Naive thymus-derived CD4-positive, alpha-beta T cell (primary cell): ENCODE measurements at regions of chr12 and their contacts with region 1.

Region 1: GRCh38 chr12:19439059-19440018 is at the start of gene AEBP2:
- DNase-seq: peak; percentile 79 to 97 (median 94)
- ATAC-seq: peak; percentile 96
- H3K4me3 ChIP-seq: peak within 1 kb of the TSS; percentile 59
- H3K4me3 Mint-ChIP-seq: peak within 1 kb of the TSS; percentile 91 to 100 (median 99)
- H3K27ac ChIP-seq: peak within 1 kb of the TSS; percentile 88
- H3K27ac Mint-ChIP-seq: peak within 1 kb of the TSS; percentile 82 to 98 (median 96)
- H3K4me1 ChIP-seq: peaks cover 23 to 35% of the 10 kb centered on the region in 2 donors
- H3K4me1 Mint-ChIP-seq: peaks cover 19 to 52% (median 49%) of the 10 kb centered on the region in 7 donors
- H3K27me3 ChIP-seq: no peaks in the 10 kb centered on the region
- H3K27me3 Mint-ChIP-seq: no peaks in the 10 kb centered on the region
- total RNA-seq, gene AEBP2: 49.2 to 58.7 (median 57.5) TPM

Region 2: DNA sequence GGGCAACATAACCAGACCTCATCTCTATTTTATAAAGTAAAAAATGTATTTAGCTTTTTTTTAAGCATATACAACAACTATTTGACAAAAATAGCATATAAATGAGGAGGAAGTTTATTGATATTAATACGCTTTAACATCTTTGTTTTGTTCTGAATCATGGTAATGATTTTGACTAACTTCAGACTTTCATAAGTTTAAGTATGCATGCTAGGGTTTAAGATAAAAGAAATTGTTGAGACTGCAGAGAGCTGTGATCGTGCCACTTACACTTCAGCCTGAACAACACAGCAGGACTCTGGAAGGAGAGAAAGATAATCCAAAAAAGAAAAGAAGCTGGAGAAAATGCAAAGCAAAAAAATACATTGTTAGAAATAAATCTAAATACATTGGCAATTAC is 88.0 kb before region 1 on chr12:
- CTCF ChIA-PET with region 1: no interaction called
- POLR2A ChIA-PET with region 1: no interaction called
- intact Hi-C with region 1: no loop called
- DNase-seq: no peak
- ATAC-seq: no peak
- H3K4me3 ChIP-seq: no peak overlapping the region
- H3K4me3 Mint-ChIP-seq: no peak overlapping the region
- H3K27ac ChIP-seq: no peak overlapping the region
- H3K27ac Mint-ChIP-seq: no peak overlapping the region
- H3K4me1 ChIP-seq: no peaks in the 10 kb centered on the region
- H3K4me1 Mint-ChIP-seq: no peaks in the 10 kb centered on the region
- H3K27me3 ChIP-seq: no peaks in the 10 kb centered on the region
- H3K27me3 Mint-ChIP-seq: no peaks in the 10 kb centered on the region

Region 3: DNA sequence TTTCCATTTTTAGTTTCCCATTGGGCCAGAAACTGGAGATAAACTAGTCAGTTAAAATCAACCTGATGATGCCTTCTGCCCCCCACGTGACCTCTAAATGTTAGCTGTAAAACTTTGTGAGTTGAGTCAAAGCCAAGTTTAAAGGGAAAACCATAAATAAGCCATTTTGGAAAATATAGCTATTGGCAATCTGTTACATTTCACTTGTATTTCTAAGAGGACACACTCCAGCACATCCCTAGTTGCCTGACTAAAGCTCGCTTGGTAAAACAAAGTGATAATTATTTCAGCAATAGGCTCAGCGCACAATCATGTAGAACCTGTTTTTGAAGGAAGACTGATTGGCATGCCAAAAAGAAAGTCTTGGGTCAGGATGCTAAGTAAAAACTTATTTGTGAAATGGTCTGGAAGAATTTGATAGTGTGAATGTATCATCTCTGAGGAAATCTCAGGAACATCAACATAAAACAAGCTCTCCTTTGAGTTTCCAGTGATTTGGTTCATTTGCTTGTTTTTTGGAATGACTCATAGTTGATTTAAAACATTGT is 49.2 kb before region 1 on chr12:
- CTCF ChIA-PET with region 1: no interaction called
- POLR2A ChIA-PET with region 1: no interaction called
- intact Hi-C with region 1: loop called in 1 of 2 experiments (anchors 10 kb)
- DNase-seq: no peak
- ATAC-seq: no peak
- H3K4me3 ChIP-seq: no peak overlapping the region
- H3K4me3 Mint-ChIP-seq: no peak overlapping the region
- H3K27ac ChIP-seq: no peak overlapping the region
- H3K27ac Mint-ChIP-seq: no peak overlapping the region
- H3K4me1 ChIP-seq: no peaks in the 10 kb centered on the region
- H3K4me1 Mint-ChIP-seq: peaks cover 0 to 4% (median 0%) of the 10 kb centered on the region in 7 donors
- H3K27me3 ChIP-seq: no peaks in the 10 kb centered on the region
- H3K27me3 Mint-ChIP-seq: no peaks in the 10 kb centered on the region

Region 4: DNA sequence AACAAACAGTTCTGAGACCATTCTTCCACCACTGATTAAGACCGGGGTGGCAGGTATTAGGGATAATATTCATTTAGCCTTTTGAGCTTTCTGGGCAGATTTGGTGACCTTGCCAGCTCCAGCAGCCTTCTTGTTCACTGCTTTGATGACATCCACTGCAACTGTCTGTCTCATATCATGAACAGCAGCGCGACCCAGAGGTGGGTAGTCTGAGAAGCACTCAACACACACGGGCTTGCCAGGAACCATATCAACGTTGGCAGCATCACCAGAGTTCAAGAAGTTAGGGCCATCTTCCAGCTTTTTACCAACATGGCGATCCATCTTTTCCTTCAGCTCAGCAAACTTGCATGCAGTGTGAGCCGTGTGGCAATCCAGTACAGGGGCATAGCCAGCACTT is 16.8 kb after region 1 on chr12:
- CTCF ChIA-PET with region 1: interaction called, 3 read pairs
- POLR2A ChIA-PET with region 1: no interaction called
- intact Hi-C with region 1: loop called in 1 of 2 experiments (anchors 2 kb)
- DNase-seq: no peak
- ATAC-seq: no peak
- H3K4me3 ChIP-seq: no peak overlapping the region
- H3K4me3 Mint-ChIP-seq: peak overlapping the region in 1 of 10 donors; percentile 39
- H3K27ac ChIP-seq: no peak overlapping the region
- H3K27ac Mint-ChIP-seq: peak overlapping the region in 2 of 9 donors; percentile 12 to 27
- H3K4me1 ChIP-seq: peaks cover 0 to 11% of the 10 kb centered on the region in 2 donors
- H3K4me1 Mint-ChIP-seq: peaks cover 36 to 90% (median 72%) of the 10 kb centered on the region in 7 donors
- H3K27me3 ChIP-seq: no peaks in the 10 kb centered on the region
- H3K27me3 Mint-ChIP-seq: no peaks in the 10 kb centered on the region

Region 5: GRCh38 chr12:19553175-19553574 is 113.8 kb after region 1 on chr12:
- CTCF ChIA-PET with region 1: no interaction called
- POLR2A ChIA-PET with region 1: no interaction called
- intact Hi-C with region 1: loop called in 1 of 2 experiments (anchors 2 kb)
- DNase-seq: no peak
- ATAC-seq: no peak
- H3K4me3 ChIP-seq: no peak overlapping the region
- H3K4me3 Mint-ChIP-seq: peak overlapping the region in 1 of 10 donors; percentile 28
- H3K27ac ChIP-seq: no peak overlapping the region
- H3K27ac Mint-ChIP-seq: no peak overlapping the region
- H3K4me1 ChIP-seq: peaks cover 0 to 9% of the 10 kb centered on the region in 2 donors
- H3K4me1 Mint-ChIP-seq: peaks cover 0 to 17% (median 0%) of the 10 kb centered on the region in 7 donors
- H3K27me3 ChIP-seq: no peaks in the 10 kb centered on the region
- H3K27me3 Mint-ChIP-seq: no peaks in the 10 kb centered on the region

Region 6: DNA sequence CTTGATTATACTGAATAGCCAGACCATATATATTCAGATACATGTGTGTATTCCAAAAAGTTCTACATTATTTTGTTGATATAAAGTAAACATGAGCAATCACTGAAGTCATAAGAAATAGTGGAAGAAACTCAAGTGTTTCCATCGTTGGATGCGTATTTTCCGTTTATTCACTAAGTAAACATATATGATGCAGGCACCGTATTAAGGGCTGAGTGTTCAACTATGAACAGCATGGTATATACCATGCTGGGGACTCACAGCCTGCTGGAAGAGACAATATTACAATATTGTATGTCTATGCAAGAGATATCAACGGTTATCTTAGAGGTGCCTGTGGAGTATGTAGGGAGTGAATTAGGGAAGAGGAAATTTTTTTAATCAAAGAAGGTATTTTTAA is 1999.3 kb after region 1 on chr12:
- CTCF ChIA-PET with region 1: no interaction called
- POLR2A ChIA-PET with region 1: no interaction called
- intact Hi-C with region 1: loop called in 1 of 2 experiments (anchors 10 kb)
- DNase-seq: no peak
- ATAC-seq: no peak
- H3K4me3 ChIP-seq: peak overlapping the region; percentile 91
- H3K4me3 Mint-ChIP-seq: peak overlapping the region; percentile 94 to 99 (median 98)
- H3K27ac ChIP-seq: peak overlapping the region; percentile 81
- H3K27ac Mint-ChIP-seq: peak overlapping the region; percentile 92 to 99 (median 97)
- H3K4me1 ChIP-seq: peaks cover 11 to 22% of the 10 kb centered on the region in 2 donors
- H3K4me1 Mint-ChIP-seq: peaks cover 32 to 72% (median 49%) of the 10 kb centered on the region in 7 donors
- H3K27me3 ChIP-seq: no peaks in the 10 kb centered on the region
- H3K27me3 Mint-ChIP-seq: peaks cover 0 to 10% (median 0%) of the 10 kb centered on the region in 5 donors